ENCODE measurements at regions of chr16 and their contacts with region 1.

Region 1: DNA sequence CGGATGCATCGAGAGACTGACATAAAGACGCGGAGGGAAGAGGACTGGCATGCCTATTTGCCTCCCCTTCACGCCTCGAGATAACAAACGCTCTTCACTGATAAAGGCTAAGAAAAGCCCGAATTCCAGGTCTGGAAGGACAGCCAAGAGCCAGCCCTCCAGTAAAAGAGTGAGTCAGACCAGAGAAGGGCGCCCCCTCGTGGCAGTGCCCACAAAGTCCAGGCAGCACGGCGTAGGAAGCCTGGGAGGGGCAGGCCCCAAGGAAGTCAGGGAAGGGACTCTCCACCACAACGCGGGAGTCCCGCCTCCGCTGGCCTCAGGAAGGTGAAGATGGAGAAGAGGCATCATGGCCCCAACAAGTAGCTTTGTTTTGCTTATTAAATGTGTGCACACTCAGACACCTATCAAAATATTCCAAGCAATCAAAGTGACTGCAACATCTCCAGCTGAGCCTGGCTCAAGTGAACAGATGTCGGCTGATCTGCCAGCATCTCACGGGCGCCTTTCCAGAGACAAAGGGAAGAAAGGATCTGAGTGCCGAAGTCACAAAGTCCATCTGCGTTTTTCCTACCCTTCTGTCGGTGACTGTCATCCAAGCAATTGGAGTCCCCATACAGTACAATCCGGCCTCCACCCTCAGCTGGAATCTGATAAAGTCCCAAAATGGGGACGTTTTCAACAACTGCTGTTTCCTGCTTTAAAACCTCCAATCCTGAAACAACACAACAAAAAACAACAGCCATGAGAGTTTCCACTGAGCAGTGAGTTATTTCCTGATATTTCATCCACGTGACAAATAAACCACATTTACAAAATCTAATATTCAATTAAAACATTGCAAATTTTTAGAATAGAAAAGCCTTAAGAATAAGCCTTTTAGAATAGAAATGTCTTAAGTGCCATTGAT is 20.4 kb upstream of the SLC38A8 start:
- DNase-seq: peak; percentile 81
- H3K4me3 ChIP-seq: no peak overlapping the region
- H3K27ac ChIP-seq: peak overlapping the region; percentile 43
- H3K4me1 ChIP-seq: peaks cover 30% of the 10 kb centered on the region
- H3K27me3 ChIP-seq: no peaks in the 10 kb centered on the region
- CTCF ChIP-seq: peak; percentile 94

Region 2: GRCh38 chr16:83826146-83826913 is 236.7 kb before region 1 on chr16:
- intact Hi-C with region 1: loop called (anchors 5 kb)
- DNase-seq: peak; percentile 82
- H3K4me3 ChIP-seq: no peak overlapping the region
- H3K27ac ChIP-seq: no peak overlapping the region
- H3K4me1 ChIP-seq: no peaks in the 10 kb centered on the region
- H3K27me3 ChIP-seq: peaks cover 16% of the 10 kb centered on the region
- CTCF ChIP-seq: peak; percentile 96

Region 3: GRCh38 chr16:83967806-83968305 is 95.1 kb before region 1 on chr16 and contains the start of gene NECAB2:
- intact Hi-C with region 1: loop called (anchors 10 kb)
- DNase-seq: peak; percentile 62
- H3K4me3 ChIP-seq: peak within 1 kb of the TSS; percentile 64
- H3K27ac ChIP-seq: no peak within 1 kb of the TSS
- H3K4me1 ChIP-seq: peaks cover 10% of the 10 kb centered on the region
- H3K27me3 ChIP-seq: peaks cover 16% of the 10 kb centered on the region
- CTCF ChIP-seq: peak; percentile 81
- total RNA-seq, gene NECAB2: 0.69 TPM